K562 (cell line): ENCODE measurements at regions of chrX and their contacts with region 1.

Region 1: GRCh38 chrX:50333308-50333707 is 128.7 kb downstream of the CCNB3 start:
- DNase-seq: no peak
- ATAC-seq: no peak
- H3K4me3 ChIP-seq: no peak overlapping the region
- H3K27ac ChIP-seq: no peak overlapping the region
- H3K4me1 ChIP-seq: no peaks in the 10 kb centered on the region
- H3K27me3 ChIP-seq: no peaks in the 10 kb centered on the region
- CTCF ChIP-seq: no peak
- EP300 ChIP-seq: no peak
- POLR2A ChIP-seq: no peak
- RAD21 ChIP-seq: no peak

Region 2: GRCh38 chrX:50579955-50580354 is 246.6 kb after region 1 on chrX:
- CTCF ChIA-PET with region 1: no interaction called
- POLR2A ChIA-PET with region 1: no interaction called
- in situ Hi-C with region 1: no loop called
- intact Hi-C with region 1: loop called (anchors 10 kb)
- DNase-seq: peak; percentile 25 to 62 (median 44)
- ATAC-seq: peak; percentile 87
- H3K4me3 ChIP-seq: no peak overlapping the region
- H3K27ac ChIP-seq: no peak overlapping the region
- H3K4me1 ChIP-seq: no peaks in the 10 kb centered on the region
- H3K27me3 ChIP-seq: no peaks in the 10 kb centered on the region
- CTCF ChIP-seq: peak; percentile 47 to 59 (median 56); a peak in 5 of 6 replicates
- EP300 ChIP-seq: no peak
- POLR2A ChIP-seq: no peak
- RAD21 ChIP-seq: peak; percentile 54 to 64